Endothelial cell of umbilical vein (primary cell): ENCODE measurements at regions of chr1 and their contacts with region 1.

Region 1: DNA sequence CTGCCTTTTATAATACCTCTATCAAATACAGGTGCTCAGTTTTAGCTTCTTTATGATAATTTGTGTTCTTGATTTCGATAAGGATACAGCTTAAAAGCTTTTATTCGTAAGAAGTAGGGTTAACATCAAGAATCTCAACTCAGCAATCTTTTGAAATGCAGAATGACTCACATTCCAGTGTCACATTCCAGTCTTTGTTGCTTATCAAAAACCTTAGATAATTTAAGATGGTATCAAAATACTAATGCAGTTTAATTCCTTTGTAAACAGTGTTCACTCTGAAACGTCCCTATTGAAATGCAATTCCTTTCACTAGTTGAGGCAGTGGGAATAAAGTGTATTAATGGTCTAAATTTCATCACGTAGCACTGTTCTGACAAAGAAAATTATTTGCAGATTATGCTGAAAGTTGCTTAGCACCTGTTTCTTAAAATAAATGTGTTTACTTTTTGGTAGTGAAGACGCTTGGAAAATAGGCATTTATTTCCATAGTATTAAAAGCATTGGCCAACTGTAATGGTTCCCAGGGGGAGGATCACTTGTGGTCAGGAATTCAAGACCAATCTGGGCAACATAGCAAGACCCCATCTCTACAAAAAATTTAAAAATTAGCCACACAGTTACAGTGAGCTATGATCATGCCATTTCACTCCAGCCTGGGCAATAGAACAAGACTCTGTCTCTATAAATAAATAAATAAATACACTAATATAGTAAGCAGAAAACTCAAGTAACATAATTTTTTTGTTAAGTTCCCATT is 10.1 kb upstream of the CNN3 start:
- DNase-seq: peak; percentile 65
- H3K4me3 ChIP-seq: no peak overlapping the region
- H3K27ac ChIP-seq: peak overlapping the region; percentile 20
- H3K4me1 ChIP-seq: peaks cover 35% of the 10 kb centered on the region
- H3K27me3 ChIP-seq: no peaks in the 10 kb centered on the region
- CTCF ChIP-seq: no peak
- POLR2A ChIP-seq: no peak

Region 2: DNA sequence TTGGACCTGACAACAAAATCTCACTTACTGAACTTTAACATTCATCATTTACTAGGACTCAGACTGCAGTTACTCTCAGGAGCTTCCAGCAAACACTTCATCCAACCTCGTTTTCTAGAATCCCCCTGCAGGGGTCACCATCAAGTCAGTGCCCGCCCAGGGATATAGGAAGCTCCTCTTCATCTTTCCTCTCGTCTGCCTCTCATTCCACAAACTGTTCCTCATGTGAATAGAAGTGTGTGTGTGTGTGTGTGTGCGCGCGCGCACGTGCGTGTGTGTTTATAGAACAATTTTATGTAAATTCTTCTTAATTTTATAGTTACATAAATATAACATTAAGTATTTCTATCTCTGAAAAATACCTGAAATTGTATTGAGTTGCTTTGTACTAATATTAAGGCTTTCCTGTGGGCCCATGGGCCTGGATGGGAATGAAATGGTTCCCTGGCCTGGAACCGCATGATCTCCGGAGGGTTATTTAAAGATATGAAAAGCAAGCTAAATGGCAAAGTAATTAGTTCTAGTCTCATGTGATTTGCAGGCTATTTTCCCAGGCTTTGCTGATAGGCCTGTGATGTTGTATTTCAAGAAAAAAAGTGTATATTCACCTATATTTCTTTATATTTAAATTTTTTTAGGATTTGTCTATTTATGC is 540.6 kb before region 1 on chr1:
- CTCF ChIA-PET with region 1: no interaction called
- POLR2A ChIA-PET with region 1: no interaction called
- dilution Hi-C with region 1: no loop called
- intact Hi-C with region 1: no loop called
- DNase-seq: no peak
- H3K4me3 ChIP-seq: no peak overlapping the region
- H3K27ac ChIP-seq: no peak overlapping the region
- H3K4me1 ChIP-seq: no peaks in the 10 kb centered on the region
- H3K27me3 ChIP-seq: peaks cover 18 to 22% of the 10 kb centered on the region in 2 experiments
- CTCF ChIP-seq: no peak
- POLR2A ChIP-seq: no peak

Region 3: GRCh38 chr1:94955767-94956632 is 19.0 kb after region 1 on chr1:
- CTCF ChIA-PET with region 1: interaction called, 4 read pairs
- POLR2A ChIA-PET with region 1: no interaction called
- dilution Hi-C with region 1: no loop called
- intact Hi-C with region 1: loop called (anchors 2 kb)
- DNase-seq: peak; percentile 53
- H3K4me3 ChIP-seq: no peak overlapping the region
- H3K27ac ChIP-seq: no peak overlapping the region
- H3K4me1 ChIP-seq: peaks cover 23% of the 10 kb centered on the region
- H3K27me3 ChIP-seq: no peaks in the 10 kb centered on the region
- CTCF ChIP-seq: no peak
- POLR2A ChIP-seq: no peak